HepG2 (cell line): ENCODE measurements at regions of chr12 and their contacts with region 1.

Region 1: GRCh38 chr12:19186722-19187661 is 57.5 kb downstream of the PLEKHA5 start:
- DNase-seq: peak; percentile 45
- ATAC-seq: peak; percentile 65
- H3K4me3 ChIP-seq: no peak overlapping the region
- H3K27ac ChIP-seq: no peak overlapping the region
- H3K4me1 ChIP-seq: peaks cover 14% of the 10 kb centered on the region
- H3K27me3 ChIP-seq: no peaks in the 10 kb centered on the region
- CTCF ChIP-seq: peak; percentile 67
- EP300 ChIP-seq: no peak
- POLR2A ChIP-seq: no peak
- RAD21 ChIP-seq: 0 out of 2 replicates have a peak, but pooled peaks have one; percentile 26

Region 2: GRCh38 chr12:18430425-18431048 is 756.5 kb before region 1 on chr12:
- CTCF ChIA-PET with region 1: no interaction called
- POLR2A ChIA-PET with region 1: no interaction called
- in situ Hi-C with region 1: loop called (anchors 25 kb)
- intact Hi-C with region 1: loop called (anchors 1 kb)
- DNase-seq: peak; percentile 24
- ATAC-seq: peak; percentile 93
- H3K4me3 ChIP-seq: no peak overlapping the region
- H3K27ac ChIP-seq: no peak overlapping the region
- H3K4me1 ChIP-seq: no peaks in the 10 kb centered on the region
- H3K27me3 ChIP-seq: no peaks in the 10 kb centered on the region
- CTCF ChIP-seq: peak; percentile 74
- EP300 ChIP-seq: no peak
- POLR2A ChIP-seq: no peak
- RAD21 ChIP-seq: no peak

Region 3: DNA sequence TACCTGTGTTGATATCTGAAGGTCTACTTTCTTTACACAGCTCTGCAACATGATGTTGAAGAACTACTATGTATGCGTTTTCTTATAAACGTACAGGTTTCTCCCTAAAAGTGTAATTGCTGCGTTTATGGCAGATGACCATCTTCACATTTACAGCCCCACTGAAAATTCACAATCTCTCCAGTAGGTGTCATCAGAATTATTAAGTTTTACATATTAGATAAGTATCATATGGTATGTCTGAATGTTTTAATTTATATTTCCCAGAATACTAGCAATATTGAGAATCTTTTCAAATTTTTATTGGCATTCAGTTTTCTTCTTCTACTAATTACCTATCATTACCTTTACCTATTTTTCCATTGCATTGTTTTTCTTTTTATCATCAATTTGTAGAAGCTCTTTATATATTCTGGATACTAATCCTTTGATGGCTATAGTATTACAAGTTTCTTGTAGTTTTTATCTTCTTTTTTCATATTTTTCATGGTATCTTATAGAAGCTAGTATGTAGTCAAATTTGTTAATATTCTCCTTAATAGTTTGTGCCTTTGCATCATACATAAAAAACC is 325.6 kb before region 1 on chr12:
- CTCF ChIA-PET with region 1: interaction called, 22 read pairs
- POLR2A ChIA-PET with region 1: no interaction called
- in situ Hi-C with region 1: loop called (anchors 10 kb)
- intact Hi-C with region 1: loop called (anchors 1 kb)
- DNase-seq: peak; percentile 29
- ATAC-seq: no peak
- H3K4me3 ChIP-seq: no peak overlapping the region
- H3K27ac ChIP-seq: no peak overlapping the region
- H3K4me1 ChIP-seq: no peaks in the 10 kb centered on the region
- H3K27me3 ChIP-seq: no peaks in the 10 kb centered on the region
- CTCF ChIP-seq: peak; percentile 49
- EP300 ChIP-seq: no peak
- POLR2A ChIP-seq: no peak
- RAD21 ChIP-seq: no peak

Region 4: GRCh38 chr12:18882690-18883089 is 304.3 kb before region 1 on chr12:
- CTCF ChIA-PET with region 1: interaction called, 3 read pairs
- POLR2A ChIA-PET with region 1: no interaction called
- in situ Hi-C with region 1: no loop called
- intact Hi-C with region 1: loop called (anchors 1 kb)
- DNase-seq: peak; percentile 5
- ATAC-seq: peak; percentile 71
- H3K4me3 ChIP-seq: no peak overlapping the region
- H3K27ac ChIP-seq: no peak overlapping the region
- H3K4me1 ChIP-seq: no peaks in the 10 kb centered on the region
- H3K27me3 ChIP-seq: no peaks in the 10 kb centered on the region
- CTCF ChIP-seq: peak; percentile 48
- EP300 ChIP-seq: no peak
- POLR2A ChIP-seq: no peak
- RAD21 ChIP-seq: no peak

Region 5: GRCh38 chr12:19021646-19022045 is 165.3 kb before region 1 on chr12:
- CTCF ChIA-PET with region 1: no interaction called
- POLR2A ChIA-PET with region 1: no interaction called
- in situ Hi-C with region 1: no loop called
- intact Hi-C with region 1: loop called (anchors 10 kb)
- DNase-seq: peak; percentile 31
- ATAC-seq: peak; percentile 56
- H3K4me3 ChIP-seq: no peak overlapping the region
- H3K27ac ChIP-seq: no peak overlapping the region
- H3K4me1 ChIP-seq: 0 out of 2 replicates have a peak, but pooled peaks cover 7% of the 10 kb centered on the region
- H3K27me3 ChIP-seq: no peaks in the 10 kb centered on the region
- CTCF ChIP-seq: no peak
- EP300 ChIP-seq: no peak
- POLR2A ChIP-seq: no peak
- RAD21 ChIP-seq: no peak

Region 6: GRCh38 chr12:19288603-19289244 is 101.7 kb after region 1 on chr12:
- CTCF ChIA-PET with region 1: no interaction called
- POLR2A ChIA-PET with region 1: no interaction called
- in situ Hi-C with region 1: no loop called
- intact Hi-C with region 1: loop called (anchors 5 kb)
- DNase-seq: peak; percentile 32
- ATAC-seq: peak; percentile 61; the same call in 2 of the 3 replicates
- H3K4me3 ChIP-seq: no peak overlapping the region
- H3K27ac ChIP-seq: no peak overlapping the region
- H3K4me1 ChIP-seq: peaks cover 7% of the 10 kb centered on the region
- H3K27me3 ChIP-seq: no peaks in the 10 kb centered on the region
- CTCF ChIP-seq: peak; percentile 54
- EP300 ChIP-seq: no peak
- POLR2A ChIP-seq: no peak
- RAD21 ChIP-seq: no peak